ENCODE measurements at regions of chr19 and their contacts with region 1.

Region 1: DNA sequence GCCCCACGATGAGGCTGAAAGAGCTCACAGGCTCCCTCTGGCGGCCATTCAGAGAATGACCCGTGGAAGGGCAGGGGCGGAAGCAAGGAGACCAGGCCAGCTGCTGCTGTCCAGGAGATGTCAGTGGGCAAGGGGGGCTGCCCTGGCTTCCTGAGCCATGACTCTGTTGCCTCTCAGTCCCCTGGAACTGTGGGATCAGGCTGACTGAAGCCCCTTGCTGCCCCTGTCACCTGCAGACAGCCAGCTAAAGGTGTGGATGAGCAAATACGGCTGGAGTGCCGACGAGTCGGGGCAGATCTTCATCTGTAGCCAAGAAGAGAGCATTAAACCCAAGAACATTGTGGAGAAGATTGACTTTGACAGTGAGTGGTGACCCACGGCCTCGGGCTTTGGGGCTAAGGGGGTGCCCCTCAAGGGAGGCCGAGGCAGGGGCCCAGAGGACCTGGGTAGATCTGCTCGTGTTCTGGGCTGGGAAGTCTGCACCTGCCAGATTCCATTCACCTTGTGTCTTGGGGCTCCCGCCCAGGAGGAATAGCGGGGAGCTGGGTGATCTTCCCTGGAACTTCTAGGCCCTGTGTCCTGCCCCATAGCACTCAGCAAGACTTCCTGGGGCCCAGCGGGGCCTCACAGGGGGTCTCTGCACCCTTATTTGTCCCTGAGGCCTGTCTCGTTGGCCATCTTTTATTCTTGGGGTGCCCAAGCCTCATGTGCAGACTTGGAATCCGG is 12.5 kb upstream of the ACTN4 start:
- DNase-seq: peak; percentile 80 to 93
- ATAC-seq: peak; percentile 58 to 64; a peak in 5 of 6 replicates
- H3K4me3 ChIP-seq: no peak overlapping the region
- H3K27ac ChIP-seq: peak overlapping the region; percentile 9 to 77; a peak in 3 of 6 replicates
- H3K4me1 ChIP-seq: peaks cover 55% of the 10 kb centered on the region
- CTCF ChIP-seq: peak; percentile 99
- EP300 ChIP-seq: no peak
- POLR2A ChIP-seq: no peak
- RAD21 ChIP-seq: peak; percentile 82 to 88

Region 2: DNA sequence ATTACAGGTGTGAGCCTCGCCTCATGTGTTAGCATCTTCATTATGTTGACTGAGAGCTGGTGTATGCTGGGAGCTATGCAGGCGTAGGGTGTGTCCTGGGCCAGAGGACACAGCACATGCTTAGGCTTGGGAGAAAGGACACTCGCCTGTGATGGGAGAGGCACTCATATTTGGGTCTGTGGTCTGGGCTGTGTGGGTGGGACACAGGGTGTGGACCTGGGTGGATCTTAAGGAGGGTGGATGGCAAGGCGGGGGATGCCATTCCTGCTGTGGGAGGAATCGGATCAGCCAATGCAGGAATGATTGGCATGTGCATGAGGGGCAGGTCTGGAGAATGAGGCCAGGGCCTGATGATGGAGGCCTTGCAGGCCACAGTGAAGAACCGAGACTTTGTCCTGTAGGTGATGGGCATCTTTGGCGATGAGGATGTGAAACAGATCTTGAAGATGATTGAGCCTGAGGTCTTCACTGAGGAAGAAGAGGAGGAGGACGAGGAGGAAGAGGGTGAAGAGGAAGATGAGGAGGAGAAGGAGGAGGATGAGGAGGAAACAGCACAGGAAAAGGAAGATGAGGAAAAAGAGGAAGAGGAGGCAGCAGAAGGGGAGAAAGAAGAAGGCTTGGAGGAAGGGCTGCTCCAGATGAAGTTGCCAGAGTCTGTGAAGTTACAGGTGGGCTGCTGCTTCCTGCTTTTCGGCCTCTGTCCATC is 146.0 kb before region 1 on chr19:
- CTCF ChIA-PET with region 1: no interaction called
- POLR2A ChIA-PET with region 1: no interaction called
- DNase-seq: no peak
- ATAC-seq: peak in 1 of 2 experiments; percentile 14; a peak in 1 of 6 replicates
- H3K4me3 ChIP-seq: no peak overlapping the region
- H3K27ac ChIP-seq: no peak overlapping the region
- H3K4me1 ChIP-seq: no peaks in the 10 kb centered on the region
- CTCF ChIP-seq: no peak
- EP300 ChIP-seq: no peak
- POLR2A ChIP-seq: no peak
- RAD21 ChIP-seq: no peak

Region 3: DNA sequence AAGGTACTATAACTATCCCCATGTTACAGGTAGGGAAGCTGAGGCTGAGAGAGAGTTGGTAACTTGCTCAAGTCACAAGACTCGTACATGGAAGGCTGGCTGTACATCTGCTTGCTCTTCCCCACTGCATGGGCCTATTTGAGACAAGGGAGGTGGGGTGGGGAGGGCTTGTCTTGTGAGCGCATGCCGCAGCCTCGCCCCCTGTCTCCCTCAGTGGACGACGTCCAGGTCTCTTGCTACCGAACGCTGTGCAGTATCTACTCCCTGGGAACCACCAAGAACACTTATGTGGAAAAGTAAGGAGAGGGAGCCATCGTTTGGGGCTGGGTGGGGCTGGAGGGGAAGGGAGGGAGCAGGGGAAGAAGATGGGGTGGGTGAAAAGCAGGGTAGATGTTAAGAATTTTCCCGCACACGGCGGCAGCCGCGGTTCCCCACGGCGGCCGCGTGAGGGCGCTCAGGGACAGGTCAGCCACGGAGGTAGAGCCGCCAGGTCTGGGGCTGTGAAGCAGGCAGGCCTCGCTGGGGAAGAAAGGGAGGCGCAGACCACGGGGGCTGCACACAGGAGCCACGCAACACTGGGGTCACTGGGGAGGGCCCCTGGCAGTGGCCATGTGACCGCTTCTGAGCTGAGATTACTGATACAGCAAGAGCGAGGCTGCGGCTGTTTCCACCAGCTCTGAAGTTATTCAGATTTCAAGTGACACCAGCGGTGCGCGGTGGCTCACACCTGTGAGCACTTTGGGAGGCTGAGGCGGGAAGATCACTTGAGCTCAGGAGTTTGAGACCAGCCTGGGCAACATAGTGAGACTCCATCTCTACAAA is 119.9 kb before region 1 on chr19:
- CTCF ChIA-PET with region 1: interaction called, 100 read pairs
- POLR2A ChIA-PET with region 1: interaction called, 4 read pairs
- DNase-seq: peak; percentile 83 to 98
- ATAC-seq: peak; percentile 78 to 94
- H3K4me3 ChIP-seq: no peak overlapping the region
- H3K27ac ChIP-seq: peak overlapping the region; percentile 15 to 54; a peak in 4 of 6 replicates
- H3K4me1 ChIP-seq: peaks cover 8% of the 10 kb centered on the region; the same call in 2 of the 3 replicates
- CTCF ChIP-seq: peak; percentile 99
- EP300 ChIP-seq: no peak
- POLR2A ChIP-seq: no peak
- RAD21 ChIP-seq: peak; percentile 98 to 99

Region 4: DNA sequence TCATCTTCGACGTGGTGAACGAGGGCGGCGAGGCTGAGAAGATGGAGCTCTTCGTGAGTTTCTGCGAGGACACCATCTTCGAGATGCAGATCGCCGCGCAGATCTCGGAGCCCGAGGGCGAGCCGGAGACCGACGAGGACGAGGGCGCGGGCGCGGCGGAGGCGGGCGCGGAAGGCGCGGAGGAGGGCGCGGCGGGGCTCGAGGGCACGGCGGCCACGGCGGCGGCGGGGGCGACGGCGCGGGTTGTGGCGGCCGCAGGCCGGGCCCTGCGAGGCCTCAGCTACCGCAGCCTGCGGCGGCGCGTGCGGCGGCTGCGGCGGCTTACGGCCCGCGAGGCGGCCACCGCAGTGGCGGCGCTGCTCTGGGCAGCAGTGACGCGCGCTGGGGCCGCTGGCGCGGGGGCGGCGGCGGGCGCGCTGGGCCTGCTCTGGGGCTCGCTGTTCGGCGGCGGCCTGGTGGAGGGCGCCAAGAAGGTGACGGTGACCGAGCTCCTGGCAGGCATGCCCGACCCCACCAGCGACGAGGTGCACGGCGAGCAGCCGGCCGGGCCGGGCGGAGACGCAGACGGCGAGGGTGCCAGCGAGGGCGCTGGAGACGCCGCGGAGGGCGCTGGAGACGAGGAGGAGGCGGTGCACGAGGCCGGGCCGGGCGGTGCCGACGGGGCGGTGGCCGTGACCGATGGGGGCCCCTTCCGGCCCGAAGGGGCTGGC is 69.8 kb before region 1 on chr19:
- CTCF ChIA-PET with region 1: interaction called, 18 read pairs
- POLR2A ChIA-PET with region 1: no interaction called
- DNase-seq: peak in 1 of 2 experiments; percentile 55
- ATAC-seq: peak; percentile 59 to 64
- H3K4me3 ChIP-seq: peak overlapping the region; percentile 39
- H3K27ac ChIP-seq: peak overlapping the region; percentile 64 to 86
- H3K4me1 ChIP-seq: 0 out of 3 replicates have a peak, but pooled peaks cover 3% of the 10 kb centered on the region
- CTCF ChIP-seq: peak; percentile 22; the same call in 2 of the 3 replicates
- EP300 ChIP-seq: no peak
- POLR2A ChIP-seq: peak; percentile 37; the same call in 1 of the 2 replicates
- RAD21 ChIP-seq: no peak

Region 5: DNA sequence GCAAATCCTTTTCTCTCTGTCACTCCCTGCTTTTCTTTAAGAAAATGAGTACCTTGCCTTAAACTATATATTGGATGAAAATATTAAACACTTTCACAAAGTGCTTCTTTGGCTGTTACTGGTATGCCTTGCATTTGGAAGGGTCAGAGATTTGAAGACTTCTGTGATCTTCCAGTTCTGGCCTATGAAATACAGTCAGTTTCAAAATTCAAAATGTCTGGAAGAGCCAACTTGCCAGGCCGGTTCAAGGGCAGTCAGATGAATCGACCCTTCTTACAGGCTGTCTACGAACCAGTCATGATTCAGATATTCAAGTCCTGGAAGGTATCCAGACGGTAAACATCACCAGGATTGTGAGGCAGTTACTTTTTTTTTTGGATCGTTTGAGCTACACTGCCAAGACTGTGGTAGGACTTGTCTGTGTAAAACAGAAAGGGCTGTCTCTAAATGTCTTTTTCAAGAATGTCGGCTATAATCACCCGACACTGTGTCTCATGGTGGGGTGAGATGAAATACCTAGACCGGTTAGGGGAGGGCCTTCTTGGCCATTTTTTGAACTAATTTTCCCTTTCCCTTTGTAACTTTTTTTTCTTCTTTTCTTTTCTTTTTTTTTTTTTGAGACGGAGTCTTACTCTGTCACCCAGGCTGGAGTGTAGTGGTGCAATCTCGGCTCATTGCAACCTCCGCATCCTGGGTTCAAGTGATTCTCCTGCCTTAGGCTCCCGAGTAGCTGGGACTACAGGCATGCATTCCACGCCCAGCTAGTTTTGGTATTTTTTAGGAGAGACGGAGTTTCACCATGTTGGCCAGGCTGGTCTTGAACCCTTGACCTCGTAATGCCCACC is 23.8 kb after region 1 on chr19:
- CTCF ChIA-PET with region 1: interaction called, 43 read pairs
- POLR2A ChIA-PET with region 1: interaction called, 4 read pairs
- DNase-seq: peak; percentile 99
- ATAC-seq: peak; percentile 82 to 88
- H3K4me3 ChIP-seq: peak overlapping the region; percentile 25
- H3K27ac ChIP-seq: peak overlapping the region; percentile 87 to 91
- H3K4me1 ChIP-seq: peaks cover 98% of the 10 kb centered on the region
- CTCF ChIP-seq: no peak
- EP300 ChIP-seq: peak; percentile 65 to 73; a peak in 2 of 5 replicates
- POLR2A ChIP-seq: no peak
- RAD21 ChIP-seq: peak; percentile 30 to 38; a peak in 2 of 5 replicates

Region 6: GRCh38 chr19:38701455-38702063 is 66.6 kb after region 1 on chr19:
- CTCF ChIA-PET with region 1: interaction called, 13 read pairs
- POLR2A ChIA-PET with region 1: no interaction called
- DNase-seq: no peak
- ATAC-seq: peak in 1 of 2 experiments; percentile 1; a peak in 1 of 6 replicates
- H3K4me3 ChIP-seq: no peak overlapping the region
- H3K27ac ChIP-seq: peak overlapping the region; percentile 25 to 93; a peak in 5 of 6 replicates
- H3K4me1 ChIP-seq: peaks cover 94% of the 10 kb centered on the region
- CTCF ChIP-seq: no peak
- EP300 ChIP-seq: no peak
- POLR2A ChIP-seq: no peak
- RAD21 ChIP-seq: no peak

Region 7: DNA sequence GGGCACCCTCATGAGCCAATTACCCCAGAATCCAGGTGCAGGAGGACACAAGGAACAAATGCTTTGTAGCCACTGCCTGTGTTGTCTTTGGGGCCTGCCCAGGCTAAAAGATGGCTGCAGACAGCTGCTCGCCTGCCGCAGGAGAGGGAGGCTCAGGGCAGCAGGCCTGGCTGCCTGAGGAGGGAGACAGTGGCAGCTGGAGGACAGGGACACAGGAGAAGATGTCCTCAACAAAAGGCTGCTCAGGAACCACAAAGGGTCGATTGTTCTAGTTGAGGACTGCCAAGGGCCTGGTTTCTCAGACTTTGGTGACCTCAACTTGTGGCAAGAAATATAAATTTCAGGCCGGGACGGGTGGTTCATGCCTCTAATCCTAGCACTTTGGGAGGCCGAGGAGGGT is 256.9 kb after region 1 on chr19:
- CTCF ChIA-PET with region 1: interaction called, 15 read pairs
- POLR2A ChIA-PET with region 1: no interaction called
- DNase-seq: no peak
- ATAC-seq: no peak
- H3K4me3 ChIP-seq: no peak overlapping the region
- H3K27ac ChIP-seq: no peak overlapping the region
- H3K4me1 ChIP-seq: no peaks in the 10 kb centered on the region
- CTCF ChIP-seq: no peak
- EP300 ChIP-seq: no peak
- POLR2A ChIP-seq: no peak
- RAD21 ChIP-seq: no peak

Region 8: GRCh38 chr19:39031368-39032062 is 396.6 kb after region 1 on chr19:
- CTCF ChIA-PET with region 1: no interaction called
- POLR2A ChIA-PET with region 1: no interaction called
- DNase-seq: peak; percentile 99
- ATAC-seq: peak; percentile 92 to 96
- H3K4me3 ChIP-seq: peak overlapping the region; percentile 53
- H3K27ac ChIP-seq: peak overlapping the region; percentile 83 to 92
- H3K4me1 ChIP-seq: peaks cover 25% of the 10 kb centered on the region
- CTCF ChIP-seq: no peak
- EP300 ChIP-seq: no peak
- POLR2A ChIP-seq: peak; percentile 83
- RAD21 ChIP-seq: no peak; a peak in 1 of 5 replicates

Measured in A549 (cell line).